Activated T-helper 2 cell treated with anti-CD3 and anti-CD28 coated beads, Interferon-gamma antibody, Interleukin-2, Interleukin-4, amounts not matched to agents 10 μg/mL and 5 μg/mL and 100 μg/mL, durations not matched to agents 14 hours and 24 hours and 36 hours (primary cell): ENCODE measurements at regions of chr5 and their contacts with region 1.

Region 1: GRCh38 chr5:59275510-59276324 is 617.8 kb downstream of the PDE4D start:
- DNase-seq: no peak
- H3K4me3 Mint-ChIP-seq: peak overlapping the region; percentile 73
- H3K27ac Mint-ChIP-seq: no peak overlapping the region
- H3K4me1 Mint-ChIP-seq: peaks cover 12% of the 10 kb centered on the region
- H3K27me3 Mint-ChIP-seq: peaks cover 24% of the 10 kb centered on the region

Region 2: GRCh38 chr5:59238126-59238902 is 37.4 kb before region 1 on chr5:
- intact Hi-C with region 1: loop called (anchors 5 kb)
- DNase-seq: no peak
- H3K4me3 Mint-ChIP-seq: no peak overlapping the region
- H3K27ac Mint-ChIP-seq: no peak overlapping the region
- H3K4me1 Mint-ChIP-seq: peaks cover 20% of the 10 kb centered on the region
- H3K27me3 Mint-ChIP-seq: peaks cover 22% of the 10 kb centered on the region

Region 3: DNA sequence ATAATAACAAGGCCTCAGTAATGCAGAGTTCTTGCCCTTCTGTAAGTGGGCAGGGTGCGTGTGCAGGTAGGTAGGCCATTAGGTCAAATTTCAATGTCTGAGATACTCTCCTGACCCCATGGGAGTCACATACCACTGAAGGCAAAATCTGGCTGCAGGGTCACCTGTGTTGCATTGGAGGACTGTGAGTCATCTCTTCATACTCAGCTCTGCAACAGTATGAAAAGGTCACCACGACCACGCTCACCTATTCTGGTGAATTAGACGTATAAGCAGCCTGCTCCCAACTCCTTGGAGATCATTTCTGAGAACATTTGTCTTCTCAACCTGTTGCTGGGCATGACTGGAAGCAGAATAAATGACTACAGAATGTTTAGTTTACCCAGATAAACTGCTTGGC is 18.0 kb after region 1 on chr5:
- intact Hi-C with region 1: no loop called
- DNase-seq: no peak
- H3K4me3 Mint-ChIP-seq: no peak overlapping the region
- H3K27ac Mint-ChIP-seq: no peak overlapping the region
- H3K4me1 Mint-ChIP-seq: peaks cover 18% of the 10 kb centered on the region
- H3K27me3 Mint-ChIP-seq: peaks cover 4% of the 10 kb centered on the region